Activated CD4-positive, alpha-beta T cell treated with anti-CD3 and anti-CD28 coated beads for 36 hours (primary cell): ENCODE measurements at regions of chr11 and their contacts with region 1.

Region 1: GRCh38 chr11:102007567-102008437 is 39.4 kb upstream of the CFAP300 start:
- DNase-seq: no peak
- ATAC-seq: no peak
- H3K4me3 Mint-ChIP-seq: no peak overlapping the region
- H3K27ac Mint-ChIP-seq: no peak overlapping the region
- H3K4me1 Mint-ChIP-seq: peaks cover 2% of the 10 kb centered on the region
- H3K27me3 Mint-ChIP-seq: peaks cover 7% of the 10 kb centered on the region

Region 2: GRCh38 chr11:101860696-101861427 is 146.9 kb before region 1 on chr11:
- CTCF ChIA-PET with region 1: interaction called, 104 read pairs
- POLR2A ChIA-PET with region 1: no interaction called
- intact Hi-C with region 1: loop called (anchors 1 kb)
- DNase-seq: peak; percentile 32
- ATAC-seq: peak; percentile 79
- H3K4me3 Mint-ChIP-seq: no peak overlapping the region
- H3K27ac Mint-ChIP-seq: no peak overlapping the region
- H3K4me1 Mint-ChIP-seq: no peaks in the 10 kb centered on the region
- H3K27me3 Mint-ChIP-seq: peaks cover 11% of the 10 kb centered on the region

Region 3: DNA sequence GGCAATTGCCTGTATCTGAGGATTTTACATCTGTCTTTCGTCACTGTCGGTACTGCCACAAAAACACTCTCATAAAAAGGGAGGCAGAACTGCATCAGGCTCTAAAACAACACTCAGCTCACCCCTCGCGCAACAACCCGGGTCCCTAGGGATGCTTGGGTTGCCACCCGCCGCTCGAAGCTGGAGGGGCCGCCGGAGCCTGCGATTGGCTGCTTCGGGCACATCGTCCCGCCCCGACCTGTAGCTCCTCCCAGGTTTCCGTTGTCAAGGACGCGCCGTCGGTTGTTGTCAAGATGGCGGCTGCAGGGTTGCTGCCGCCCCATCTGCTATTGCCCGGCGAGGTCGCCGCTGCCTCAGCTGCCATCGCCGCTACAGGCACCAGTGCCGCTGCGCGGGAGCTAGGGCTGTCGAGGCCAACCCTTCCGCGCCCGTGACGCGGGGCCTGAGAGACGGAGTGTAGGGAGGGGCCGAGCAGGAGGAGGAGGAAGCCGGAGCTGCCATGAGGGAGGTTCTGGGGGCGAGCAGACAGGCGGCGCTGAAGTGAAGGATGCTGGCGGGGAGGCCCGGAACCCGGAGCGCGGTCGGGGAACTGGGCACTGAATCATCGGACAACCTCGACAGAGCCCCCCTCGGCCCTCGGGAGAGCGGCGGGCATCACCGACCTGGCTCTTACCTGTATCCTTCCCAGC is 92.9 kb before region 1 on chr11 and contains the start of gene CEP126:
- CTCF ChIA-PET with region 1: interaction called, 5 read pairs
- POLR2A ChIA-PET with region 1: no interaction called
- intact Hi-C with region 1: loop called (anchors 5 to 10 kb)
- DNase-seq: peak; percentile 96
- ATAC-seq: peak; percentile 96
- H3K4me3 Mint-ChIP-seq: peak within 1 kb of the TSS; percentile 86
- H3K27ac Mint-ChIP-seq: peak within 1 kb of the TSS; percentile 86
- H3K4me1 Mint-ChIP-seq: peaks cover 16% of the 10 kb centered on the region
- H3K27me3 Mint-ChIP-seq: peaks cover 2% of the 10 kb centered on the region
- total RNA-seq, gene CEP126: 1.3 to 2.0 TPM

Region 4: DNA sequence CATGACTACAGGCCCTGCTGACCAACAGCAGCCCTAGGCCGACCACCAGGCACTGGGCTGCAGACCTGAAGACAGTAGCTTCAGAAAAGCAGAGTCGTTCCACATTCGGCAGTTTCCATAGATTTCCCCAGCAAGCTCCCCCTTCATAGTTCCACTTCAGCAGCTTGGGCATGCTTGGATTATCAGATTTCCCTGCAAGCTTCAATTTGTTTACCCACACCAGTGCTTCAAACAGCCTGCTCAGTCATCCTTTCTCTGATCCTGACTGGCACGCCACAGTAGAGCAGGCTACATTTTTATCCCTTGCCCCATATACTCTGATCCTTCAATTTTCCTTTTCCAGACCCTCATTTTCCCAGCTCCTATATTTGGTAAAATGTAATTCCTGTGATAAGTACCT is 11.7 kb before region 1 on chr11:
- CTCF ChIA-PET with region 1: interaction called, 10 read pairs
- POLR2A ChIA-PET with region 1: no interaction called
- intact Hi-C with region 1: no loop called
- DNase-seq: no peak
- ATAC-seq: no peak
- H3K4me3 Mint-ChIP-seq: no peak overlapping the region
- H3K27ac Mint-ChIP-seq: no peak overlapping the region
- H3K4me1 Mint-ChIP-seq: no peaks in the 10 kb centered on the region
- H3K27me3 Mint-ChIP-seq: no peaks in the 10 kb centered on the region

Region 5: GRCh38 chr11:102036757-102037156 is 29.0 kb after region 1 on chr11:
- CTCF ChIA-PET with region 1: no interaction called
- POLR2A ChIA-PET with region 1: no interaction called
- intact Hi-C with region 1: no loop called
- DNase-seq: no peak
- ATAC-seq: no peak
- H3K4me3 Mint-ChIP-seq: no peak overlapping the region
- H3K27ac Mint-ChIP-seq: no peak overlapping the region
- H3K4me1 Mint-ChIP-seq: no peaks in the 10 kb centered on the region
- H3K27me3 Mint-ChIP-seq: peaks cover 8% of the 10 kb centered on the region

Region 6: GRCh38 chr11:102367364-102367763 is 359.6 kb after region 1 on chr11:
- CTCF ChIA-PET with region 1: no interaction called
- POLR2A ChIA-PET with region 1: no interaction called
- intact Hi-C with region 1: no loop called
- DNase-seq: no peak
- ATAC-seq: peak; percentile 50
- H3K4me3 Mint-ChIP-seq: no peak overlapping the region
- H3K27ac Mint-ChIP-seq: no peak overlapping the region
- H3K4me1 Mint-ChIP-seq: peaks cover 27% of the 10 kb centered on the region
- H3K27me3 Mint-ChIP-seq: no peaks in the 10 kb centered on the region